AG04450 (cell line): ENCODE measurements at regions of chr14 and their contacts with region 1.

Region 1: GRCh38 chr14:103488960-103489359 is 33.7 kb downstream of the CKB start:
- DNase-seq: peak; percentile 16
- H3K4me3 ChIP-seq: no peak overlapping the region
- H3K27ac ChIP-seq: peak overlapping the region; percentile 58
- H3K27me3 ChIP-seq: no peaks in the 10 kb centered on the region
- CTCF ChIP-seq: no peak

Region 2: DNA sequence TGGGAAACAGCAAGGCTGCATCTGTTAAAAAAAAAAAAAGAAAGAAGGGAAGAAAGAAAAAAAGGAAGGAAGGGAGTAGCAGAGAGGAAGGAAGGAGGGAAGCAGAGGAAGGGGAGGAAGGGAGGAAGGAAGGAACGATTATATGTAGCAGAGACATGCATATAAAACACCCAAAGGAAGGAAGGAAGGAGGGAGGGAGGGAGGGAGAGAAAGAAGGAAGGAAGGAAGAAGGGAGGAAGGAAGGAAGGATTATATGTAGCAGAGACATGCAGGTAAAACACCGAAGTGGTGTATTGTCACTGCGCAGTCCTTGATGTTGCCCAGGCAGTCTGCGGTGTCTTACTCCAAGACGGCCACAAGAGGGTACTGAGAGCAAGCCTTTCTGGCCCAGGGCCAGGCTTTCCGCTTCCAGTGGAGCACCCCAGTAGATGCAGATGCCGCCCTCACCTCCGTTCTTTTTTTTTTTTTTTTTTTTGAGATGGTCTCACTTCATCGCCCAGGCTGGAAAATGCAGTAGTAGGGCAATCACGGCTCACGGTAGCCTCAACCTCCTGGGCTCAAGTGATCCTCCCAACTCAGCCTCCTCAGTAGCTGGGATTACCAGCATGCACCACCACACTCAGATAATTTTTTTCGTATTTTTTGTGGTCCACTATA is 410.7 kb before region 1 on chr14:
- CTCF ChIA-PET with region 1: no interaction called
- POLR2A ChIA-PET with region 1: no interaction called
- DNase-seq: peak; percentile 48
- H3K4me3 ChIP-seq: no peak overlapping the region
- H3K27ac ChIP-seq: no peak overlapping the region
- H3K27me3 ChIP-seq: peaks cover 11% of the 10 kb centered on the region
- CTCF ChIP-seq: peak; percentile 84

Region 3: GRCh38 chr14:103500148-103500990 is 11.4 kb after region 1 on chr14:
- CTCF ChIA-PET with region 1: interaction called, 26 read pairs
- POLR2A ChIA-PET with region 1: no interaction called
- DNase-seq: peak; percentile 66
- H3K4me3 ChIP-seq: no peak overlapping the region
- H3K27ac ChIP-seq: no peak overlapping the region
- H3K27me3 ChIP-seq: no peaks in the 10 kb centered on the region
- CTCF ChIP-seq: peak; percentile 98